CD8-positive, alpha-beta T cell (primary cell): ENCODE measurements at regions of chr21 and their contacts with region 1.

Region 1: GRCh38 chr21:46144464-46145070 is 10.8 kb downstream of the FTCD start:
- DNase-seq: peak in 1 of 9 experiments; percentile 4
- ATAC-seq: no peak
- H3K4me3 ChIP-seq: no peak overlapping the region
- H3K4me3 Mint-ChIP-seq: no peak overlapping the region
- H3K27ac ChIP-seq: no peak overlapping the region
- H3K27ac Mint-ChIP-seq: peak overlapping the region; percentile 75
- H3K4me1 ChIP-seq: peaks cover 5% of the 10 kb centered on the region
- H3K4me1 Mint-ChIP-seq: peaks cover 8% of the 10 kb centered on the region
- H3K27me3 ChIP-seq: no peaks in the 10 kb centered on the region
- H3K27me3 Mint-ChIP-seq: peaks cover 2% of the 10 kb centered on the region
- CTCF ChIP-seq: no peak

Region 2: GRCh38 chr21:45973659-45974072 is 170.9 kb before region 1 on chr21:
- CTCF ChIA-PET with region 1: interaction called, 26 read pairs
- POLR2A ChIA-PET with region 1: no interaction called
- intact Hi-C with region 1: loop called (anchors 2 to 5 kb)
- DNase-seq: peak; percentile 64 to 91 (median 85)
- ATAC-seq: peak; percentile 92
- H3K4me3 ChIP-seq: peak overlapping the region; percentile 64 to 87
- H3K4me3 Mint-ChIP-seq: peak overlapping the region; percentile 86
- H3K27ac ChIP-seq: peak overlapping the region in 1 of 2 experiments; percentile 40
- H3K27ac Mint-ChIP-seq: peak overlapping the region; percentile 74
- H3K4me1 ChIP-seq: peaks cover 27% of the 10 kb centered on the region
- H3K4me1 Mint-ChIP-seq: peaks cover 13% of the 10 kb centered on the region
- H3K27me3 ChIP-seq: peaks cover 0 to 36% of the 10 kb centered on the region in 2 experiments
- H3K27me3 Mint-ChIP-seq: peaks cover 19% of the 10 kb centered on the region
- CTCF ChIP-seq: peak; percentile 83

Region 3: DNA sequence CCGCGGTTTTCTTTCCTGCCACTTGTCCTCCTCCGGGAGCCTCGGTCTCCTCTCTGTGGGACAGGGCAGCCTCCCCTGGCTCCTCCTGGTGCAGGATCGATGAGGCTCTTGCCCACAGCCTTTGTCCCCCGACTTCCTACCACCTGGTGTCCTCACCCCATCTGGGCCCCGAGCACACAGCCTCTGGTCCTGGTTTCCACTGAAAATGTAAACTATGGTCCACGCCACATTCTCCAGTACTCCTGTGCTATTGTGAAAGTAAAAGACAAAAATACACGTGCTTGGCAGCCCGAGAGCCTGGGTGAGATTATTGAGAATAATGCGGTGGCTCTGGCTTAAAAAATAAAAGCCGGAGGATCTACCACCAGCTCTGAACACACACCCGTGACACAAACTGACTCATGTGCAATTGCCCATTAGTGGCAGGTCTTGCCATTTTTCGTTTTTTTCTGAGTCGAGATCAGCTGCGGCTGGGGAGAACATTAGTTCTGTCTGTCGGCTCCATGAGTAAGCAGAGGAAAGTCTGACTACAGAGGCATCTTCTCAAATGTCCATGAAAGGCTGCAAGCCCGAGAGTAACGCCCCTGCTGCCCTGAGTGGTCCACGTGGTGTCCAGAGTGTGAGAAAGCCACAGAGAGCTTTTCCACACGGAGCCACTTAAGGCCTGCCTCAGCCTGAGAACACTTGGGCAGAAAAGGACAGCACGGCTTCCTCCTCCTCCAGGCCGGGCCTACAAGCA is 52.4 kb before region 1 on chr21:
- CTCF ChIA-PET with region 1: no interaction called
- POLR2A ChIA-PET with region 1: no interaction called
- intact Hi-C with region 1: no loop called
- DNase-seq: peak in 1 of 9 experiments; percentile 36
- ATAC-seq: no peak
- H3K4me3 ChIP-seq: no peak overlapping the region
- H3K4me3 Mint-ChIP-seq: no peak overlapping the region
- H3K27ac ChIP-seq: no peak overlapping the region
- H3K27ac Mint-ChIP-seq: no peak overlapping the region
- H3K4me1 ChIP-seq: peaks cover 3% of the 10 kb centered on the region
- H3K4me1 Mint-ChIP-seq: peaks cover 8% of the 10 kb centered on the region
- H3K27me3 ChIP-seq: no peaks in the 10 kb centered on the region
- H3K27me3 Mint-ChIP-seq: peaks cover 2% of the 10 kb centered on the region
- CTCF ChIP-seq: no peak

Region 4: GRCh38 chr21:46184625-46185555 is 40.3 kb after region 1 on chr21:
- CTCF ChIA-PET with region 1: no interaction called
- POLR2A ChIA-PET with region 1: no interaction called
- intact Hi-C with region 1: loop called in 1 of 2 experiments (anchors 1 kb)
- DNase-seq: peak; percentile 39 to 94 (median 77)
- ATAC-seq: peak; percentile 86
- H3K4me3 ChIP-seq: peak overlapping the region; percentile 64 to 79
- H3K4me3 Mint-ChIP-seq: peak overlapping the region; percentile 86
- H3K27ac ChIP-seq: peak overlapping the region; percentile 67 to 83
- H3K27ac Mint-ChIP-seq: peak overlapping the region; percentile 91
- H3K4me1 ChIP-seq: peaks cover 9% of the 10 kb centered on the region
- H3K4me1 Mint-ChIP-seq: peaks cover 15% of the 10 kb centered on the region
- H3K27me3 ChIP-seq: no peaks in the 10 kb centered on the region
- H3K27me3 Mint-ChIP-seq: no peaks in the 10 kb centered on the region
- CTCF ChIP-seq: no peak

Region 5: GRCh38 chr21:46228345-46229051 is 83.9 kb after region 1 on chr21 and contains the start of gene LSS:
- CTCF ChIA-PET with region 1: interaction called, 11 read pairs
- POLR2A ChIA-PET with region 1: no interaction called
- intact Hi-C with region 1: loop called (anchors 1 kb)
- DNase-seq: peak; percentile 96 to 100 (median 98)
- ATAC-seq: peak; percentile 97
- H3K4me3 ChIP-seq: peak within 1 kb of the TSS; percentile 81 to 88
- H3K4me3 Mint-ChIP-seq: peak within 1 kb of the TSS; percentile 93
- H3K27ac ChIP-seq: peak within 1 kb of the TSS; percentile 55 to 58
- H3K27ac Mint-ChIP-seq: peak within 1 kb of the TSS; percentile 91
- H3K4me1 ChIP-seq: peaks cover 25% of the 10 kb centered on the region
- H3K4me1 Mint-ChIP-seq: peaks cover 49% of the 10 kb centered on the region
- H3K27me3 ChIP-seq: no peaks in the 10 kb centered on the region
- H3K27me3 Mint-ChIP-seq: no peaks in the 10 kb centered on the region
- CTCF ChIP-seq: no peak
- total RNA-seq, gene LSS: 22.5 to 22.6 TPM

Region 6: GRCh38 chr21:46234496-46234895 is 89.9 kb after region 1 on chr21:
- CTCF ChIA-PET with region 1: interaction called, 11 read pairs
- POLR2A ChIA-PET with region 1: no interaction called
- intact Hi-C with region 1: loop called (anchors 1 kb)
- DNase-seq: no peak
- ATAC-seq: no peak
- H3K4me3 ChIP-seq: no peak overlapping the region
- H3K4me3 Mint-ChIP-seq: no peak overlapping the region
- H3K27ac ChIP-seq: peak overlapping the region in 1 of 2 experiments; percentile 62
- H3K27ac Mint-ChIP-seq: peak overlapping the region; percentile 46
- H3K4me1 ChIP-seq: peaks cover 4% of the 10 kb centered on the region
- H3K4me1 Mint-ChIP-seq: peaks cover 26% of the 10 kb centered on the region
- H3K27me3 ChIP-seq: no peaks in the 10 kb centered on the region
- H3K27me3 Mint-ChIP-seq: no peaks in the 10 kb centered on the region
- CTCF ChIP-seq: no peak

Region 7: DNA sequence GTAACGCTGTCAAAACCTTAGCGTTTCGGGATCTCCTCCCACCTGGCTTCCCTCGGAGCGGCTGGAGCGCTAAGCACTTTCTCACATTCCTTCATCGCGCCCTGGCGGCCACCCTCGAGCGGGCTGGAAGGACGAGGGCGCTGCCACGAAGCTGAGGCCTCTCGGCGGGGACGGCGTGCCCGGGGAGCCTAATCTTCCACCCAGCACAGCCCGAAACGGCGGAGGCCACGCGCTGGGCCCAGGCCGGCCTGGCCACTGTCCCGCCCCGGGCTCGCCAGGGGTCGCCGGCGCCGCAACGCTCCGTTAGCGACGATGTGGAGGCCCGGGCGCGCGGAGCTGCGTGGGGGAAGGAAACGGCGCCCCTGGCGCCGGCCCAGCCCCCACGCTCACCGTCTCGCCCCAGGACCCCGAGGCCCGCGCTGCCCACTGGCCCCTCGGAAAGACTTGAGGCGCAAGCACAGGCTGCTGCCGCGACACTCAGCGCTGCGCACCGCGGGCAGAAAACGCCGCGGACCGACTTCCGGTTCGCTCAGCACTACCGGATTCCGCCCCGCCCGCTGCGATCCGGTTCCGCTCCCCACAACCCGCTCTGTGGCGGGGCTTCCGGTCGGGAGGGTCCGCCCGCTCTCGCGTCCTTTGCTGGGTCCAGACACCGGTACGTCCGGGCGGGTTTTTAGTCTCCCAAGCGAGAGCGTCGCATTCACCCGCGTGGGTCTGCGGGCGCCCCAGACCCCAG is 141.4 kb after region 1 on chr21 and contains the start of gene YBEY:
- CTCF ChIA-PET with region 1: interaction called, 6 read pairs
- POLR2A ChIA-PET with region 1: no interaction called
- intact Hi-C with region 1: loop called (anchors 1 to 2 kb)
- DNase-seq: peak; percentile 59 to 93 (median 84)
- ATAC-seq: peak; percentile 79
- H3K4me3 ChIP-seq: peak within 1 kb of the TSS; percentile 85 to 88
- H3K4me3 Mint-ChIP-seq: peak within 1 kb of the TSS; percentile 90
- H3K27ac ChIP-seq: peak within 1 kb of the TSS; percentile 72 to 86
- H3K27ac Mint-ChIP-seq: peak within 1 kb of the TSS; percentile 94
- H3K4me1 ChIP-seq: peaks cover 38% of the 10 kb centered on the region
- H3K4me1 Mint-ChIP-seq: peaks cover 61% of the 10 kb centered on the region
- H3K27me3 ChIP-seq: no peaks in the 10 kb centered on the region
- H3K27me3 Mint-ChIP-seq: no peaks in the 10 kb centered on the region
- CTCF ChIP-seq: peak; percentile 43
- total RNA-seq, gene YBEY: 10.8 to 13.6 TPM